SK-N-SH (cell line): ENCODE measurements at regions of chr17 and their contacts with region 1.

Region 1: GRCh38 chr17:76868176-76868668 is at the start of gene MGAT5B:
- DNase-seq: peak; percentile 100
- H3K4me3 ChIP-seq: peak within 1 kb of the TSS; percentile 56 to 74
- H3K27ac ChIP-seq: peak within 1 kb of the TSS in 1 of 2 experiments; percentile 60; a peak in 2 of 4 replicates
- H3K4me1 ChIP-seq: peaks cover 17 to 36% of the 10 kb centered on the region in 2 experiments; a peak in 3 of 4 replicates
- H3K27me3 ChIP-seq: no peaks in the 10 kb centered on the region
- CTCF ChIP-seq: peak; percentile 80
- EP300 ChIP-seq: no peak; a peak in 1 of 4 replicates
- RAD21 ChIP-seq: peak; percentile 93
- polyA plus RNA-seq, gene MGAT5B: 10.3 and 13.8 TPM in 2 replicates

Region 2: DNA sequence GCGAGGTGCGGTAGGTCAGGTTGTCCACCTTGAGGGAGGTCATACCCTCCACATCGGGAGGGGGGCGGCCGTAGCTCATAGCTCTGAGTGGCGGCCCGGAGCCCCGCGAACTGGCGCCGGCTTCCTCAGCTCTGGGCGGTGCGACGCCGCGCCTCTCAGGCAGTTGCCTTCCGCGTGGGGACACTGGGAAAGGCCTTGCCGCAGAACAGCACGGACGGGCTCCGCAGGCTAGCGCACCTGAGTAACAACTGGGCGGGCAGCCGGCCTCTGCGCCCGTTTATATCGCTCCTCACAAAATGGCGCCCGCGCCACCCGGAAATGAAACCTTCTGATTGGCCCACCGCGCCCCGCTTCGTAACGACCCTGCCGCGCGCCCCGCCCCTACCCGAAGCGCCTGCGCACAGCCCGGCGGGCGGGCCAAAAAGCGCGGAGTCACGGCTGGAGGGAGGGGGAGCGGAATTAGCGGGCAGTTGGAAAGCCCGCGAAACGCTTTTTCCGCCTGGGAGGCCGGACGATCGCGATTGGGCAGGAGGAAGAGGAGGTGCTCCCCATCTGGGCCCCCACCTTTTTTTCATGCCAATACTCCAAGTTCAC is 131.0 kb before region 1 on chr17 and contains the start of gene SRSF2:
- CTCF ChIA-PET with region 1: interaction called, 19 read pairs
- POLR2A ChIA-PET with region 1: interaction called, 5 read pairs
- DNase-seq: peak; percentile 100
- H3K4me3 ChIP-seq: peak within 1 kb of the TSS; percentile 93 to 100
- H3K27ac ChIP-seq: peak within 1 kb of the TSS; percentile 98 to 100
- H3K4me1 ChIP-seq: peaks cover 34 to 44% of the 10 kb centered on the region in 2 experiments
- H3K27me3 ChIP-seq: no peaks in the 10 kb centered on the region
- CTCF ChIP-seq: no peak
- EP300 ChIP-seq: peak in 1 of 2 experiments; percentile 26; a peak in 1 of 4 replicates
- RAD21 ChIP-seq: no peak
- polyA plus RNA-seq, gene SRSF2: 211 and 271 TPM in 2 replicates

Region 3: GRCh38 chr17:76843703-76844484 is 24.3 kb before region 1 on chr17:
- CTCF ChIA-PET with region 1: interaction called, 44 read pairs
- POLR2A ChIA-PET with region 1: interaction called, 4 read pairs
- DNase-seq: peak; percentile 59
- H3K4me3 ChIP-seq: no peak overlapping the region
- H3K27ac ChIP-seq: peak overlapping the region in 1 of 2 experiments; percentile 50; a peak in 2 of 4 replicates
- H3K4me1 ChIP-seq: peaks cover 4 to 51% of the 10 kb centered on the region in 2 experiments; a peak in 2 of 4 replicates
- H3K27me3 ChIP-seq: peaks cover 32% of the 10 kb centered on the region; the same call in 1 of the 2 replicates
- CTCF ChIP-seq: no peak
- EP300 ChIP-seq: no peak
- RAD21 ChIP-seq: peak; percentile 31

Region 4: GRCh38 chr17:76893623-76894334 is 25.6 kb after region 1 on chr17:
- CTCF ChIA-PET with region 1: interaction called, 19 read pairs
- POLR2A ChIA-PET with region 1: no interaction called
- DNase-seq: no peak
- H3K4me3 ChIP-seq: no peak overlapping the region
- H3K27ac ChIP-seq: no peak overlapping the region
- H3K4me1 ChIP-seq: no peaks in the 10 kb centered on the region
- H3K27me3 ChIP-seq: no peaks in the 10 kb centered on the region
- CTCF ChIP-seq: no peak
- EP300 ChIP-seq: no peak
- RAD21 ChIP-seq: no peak

Region 5: GRCh38 chr17:76957678-76958464 is 89.6 kb after region 1 on chr17:
- CTCF ChIA-PET with region 1: interaction called, 17 read pairs
- POLR2A ChIA-PET with region 1: no interaction called
- DNase-seq: no peak
- H3K4me3 ChIP-seq: no peak overlapping the region
- H3K27ac ChIP-seq: no peak overlapping the region
- H3K4me1 ChIP-seq: peaks cover 0 to 8% of the 10 kb centered on the region in 2 experiments; a peak in 2 of 4 replicates
- H3K27me3 ChIP-seq: no peaks in the 10 kb centered on the region
- CTCF ChIP-seq: no peak
- EP300 ChIP-seq: no peak
- RAD21 ChIP-seq: no peak

Region 6: GRCh38 chr17:77036807-77037381 is 168.7 kb after region 1 on chr17:
- CTCF ChIA-PET with region 1: interaction called, 30 read pairs
- POLR2A ChIA-PET with region 1: no interaction called
- DNase-seq: peak; percentile 84
- H3K4me3 ChIP-seq: peak overlapping the region in 1 of 2 experiments; percentile 4; a peak in 1 of 4 replicates
- H3K27ac ChIP-seq: peak overlapping the region in 1 of 2 experiments; percentile 17; a peak in 1 of 4 replicates
- H3K4me1 ChIP-seq: peaks cover 0 to 16% of the 10 kb centered on the region in 2 experiments; a peak in 2 of 4 replicates
- H3K27me3 ChIP-seq: peaks cover 42% of the 10 kb centered on the region
- CTCF ChIP-seq: no peak
- EP300 ChIP-seq: peak in 1 of 2 experiments; percentile 32; a peak in 1 of 4 replicates
- RAD21 ChIP-seq: peak; percentile 35

Region 7: GRCh38 chr17:77076124-77076872 is 208.1 kb after region 1 on chr17:
- CTCF ChIA-PET with region 1: interaction called, 594 read pairs
- POLR2A ChIA-PET with region 1: no interaction called
- DNase-seq: no peak
- H3K4me3 ChIP-seq: no peak overlapping the region
- H3K27ac ChIP-seq: no peak overlapping the region
- H3K4me1 ChIP-seq: no peaks in the 10 kb centered on the region; a peak in 1 of 4 replicates
- H3K27me3 ChIP-seq: peaks cover 29% of the 10 kb centered on the region
- CTCF ChIP-seq: no peak
- EP300 ChIP-seq: no peak
- RAD21 ChIP-seq: no peak